Mammary epithelial cell (primary cell): ENCODE measurements at regions of chr14 and their contacts with region 1.

Region 1: GRCh38 chr14:69299286-69300035 is 39.5 kb downstream of the GALNT16 start:
- DNase-seq: no peak
- H3K4me3 ChIP-seq: no peak overlapping the region
- H3K27ac ChIP-seq: no peak overlapping the region
- H3K4me1 ChIP-seq: no peaks in the 10 kb centered on the region
- H3K27me3 ChIP-seq: peaks cover 2% of the 10 kb centered on the region
- CTCF ChIP-seq: peak; percentile 20 to 38

Region 2: GRCh38 chr14:68762953-68763764 is 536.3 kb before region 1 on chr14:
- CTCF ChIA-PET with region 1: no interaction called
- dilution Hi-C with region 1: no loop called
- in situ Hi-C with region 1: no loop called
- intact Hi-C with region 1: no loop called
- DNase-seq: peak; percentile 34
- H3K4me3 ChIP-seq: no peak overlapping the region
- H3K27ac ChIP-seq: no peak overlapping the region
- H3K4me1 ChIP-seq: peaks cover 4% of the 10 kb centered on the region
- H3K27me3 ChIP-seq: no peaks in the 10 kb centered on the region
- CTCF ChIP-seq: no peak

Region 3: GRCh38 chr14:69154779-69155178 is 144.7 kb before region 1 on chr14:
- CTCF ChIA-PET with region 1: no interaction called
- dilution Hi-C with region 1: no loop called
- in situ Hi-C with region 1: no loop called
- intact Hi-C with region 1: no loop called
- DNase-seq: no peak
- H3K4me3 ChIP-seq: no peak overlapping the region
- H3K27ac ChIP-seq: no peak overlapping the region
- H3K4me1 ChIP-seq: peaks cover 18% of the 10 kb centered on the region
- H3K27me3 ChIP-seq: peaks cover 4% of the 10 kb centered on the region
- CTCF ChIP-seq: peak in 1 of 2 donors; percentile 8

Region 4: DNA sequence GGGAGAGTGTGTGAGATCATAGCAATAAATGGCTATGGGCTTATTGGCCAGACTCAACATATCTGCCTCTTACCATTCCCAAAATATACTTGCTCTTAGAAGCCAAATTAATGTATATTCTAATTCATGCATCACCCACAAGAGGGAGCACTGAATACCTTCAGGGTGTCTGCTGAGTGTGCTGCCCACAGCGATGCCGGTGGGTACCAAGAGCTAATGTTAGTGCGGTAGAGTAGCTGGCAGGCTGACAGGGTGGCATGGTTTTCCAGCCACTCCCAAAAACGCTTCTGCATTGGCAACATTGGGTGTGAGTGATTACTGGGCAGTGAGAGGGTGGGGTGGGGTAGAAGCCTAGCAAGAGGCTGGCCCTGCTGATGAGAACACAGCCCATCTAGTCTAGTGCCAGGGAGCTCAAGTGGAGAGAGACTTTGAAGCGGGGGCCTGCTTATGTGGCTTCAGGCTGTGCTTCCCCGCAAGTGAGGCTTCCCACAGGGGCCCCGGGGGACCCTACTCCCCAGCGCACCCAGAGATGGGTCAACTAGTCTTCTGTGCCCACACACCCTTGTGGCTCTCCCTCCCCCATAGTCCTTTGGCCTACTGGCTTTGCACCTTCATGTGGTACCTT is 175.8 kb after region 1 on chr14:
- CTCF ChIA-PET with region 1: interaction called, 12 read pairs
- dilution Hi-C with region 1: no loop called
- in situ Hi-C with region 1: no loop called
- intact Hi-C with region 1: no loop called
- DNase-seq: peak; percentile 5
- H3K4me3 ChIP-seq: no peak overlapping the region
- H3K27ac ChIP-seq: no peak overlapping the region
- H3K4me1 ChIP-seq: no peaks in the 10 kb centered on the region
- H3K27me3 ChIP-seq: no peaks in the 10 kb centered on the region
- CTCF ChIP-seq: peak; percentile 55 to 70